ENCODE measurements at regions of chr3 and their contacts with region 1.

Region 1: DNA sequence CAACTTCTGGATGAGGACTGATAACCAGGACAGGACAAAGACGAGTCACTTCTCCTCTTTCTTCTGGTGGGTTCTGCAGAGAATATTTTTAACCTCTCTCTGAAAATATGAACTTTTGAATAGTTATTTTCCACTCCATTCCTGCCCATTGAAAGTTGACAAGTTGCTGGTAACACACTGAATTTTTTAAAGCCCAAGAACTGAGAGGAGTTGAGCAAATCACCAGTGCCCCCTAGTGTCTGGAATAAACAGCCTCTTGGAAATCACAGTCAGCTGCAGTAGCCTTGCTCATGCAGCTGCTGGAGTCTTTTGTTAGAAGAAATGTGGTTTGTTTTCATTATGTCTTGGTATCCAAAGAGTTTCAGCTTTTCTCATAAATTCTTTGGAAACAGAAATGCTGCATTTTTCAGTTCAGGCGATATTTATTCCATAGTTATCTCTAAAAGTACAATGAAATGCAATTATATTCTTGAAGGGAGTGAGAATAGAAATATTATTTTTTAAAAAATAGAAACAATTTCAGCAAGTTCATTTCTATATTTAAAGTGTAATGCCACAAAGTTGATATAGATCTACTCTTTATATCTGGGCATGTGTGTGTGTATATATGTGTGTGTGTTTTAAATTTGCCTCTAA is 741.0 kb upstream of the CBLB start:
- DNase-seq: no peak
- H3K4me3 ChIP-seq: no peak overlapping the region
- H3K27ac ChIP-seq: no peak overlapping the region
- H3K4me1 ChIP-seq: no peaks in the 10 kb centered on the region
- H3K27me3 ChIP-seq: no peaks in the 10 kb centered on the region
- CTCF ChIP-seq: peak; percentile 91

Region 2: GRCh38 chr3:105686278-105686897 is 923.4 kb before region 1 on chr3:
- intact Hi-C with region 1: loop called (anchors 10 kb)
- DNase-seq: no peak
- H3K4me3 ChIP-seq: no peak overlapping the region
- H3K27ac ChIP-seq: no peak overlapping the region
- H3K4me1 ChIP-seq: peaks cover 44% of the 10 kb centered on the region
- H3K27me3 ChIP-seq: no peaks in the 10 kb centered on the region
- CTCF ChIP-seq: peak; percentile 86